K562 (cell line): ENCODE measurements at regions of chr1 and their contacts with region 1.

Region 1: GRCh38 chr1:52022133-52022532 is 11.5 kb downstream of the KTI12 start:
- DNase-seq: no peak
- ATAC-seq: no peak
- H3K4me3 ChIP-seq: no peak overlapping the region
- H3K27ac ChIP-seq: no peak overlapping the region
- H3K4me1 ChIP-seq: no peaks in the 10 kb centered on the region
- H3K27me3 ChIP-seq: no peaks in the 10 kb centered on the region
- CTCF ChIP-seq: no peak
- EP300 ChIP-seq: no peak
- POLR2A ChIP-seq: no peak
- RAD21 ChIP-seq: no peak

Region 2: DNA sequence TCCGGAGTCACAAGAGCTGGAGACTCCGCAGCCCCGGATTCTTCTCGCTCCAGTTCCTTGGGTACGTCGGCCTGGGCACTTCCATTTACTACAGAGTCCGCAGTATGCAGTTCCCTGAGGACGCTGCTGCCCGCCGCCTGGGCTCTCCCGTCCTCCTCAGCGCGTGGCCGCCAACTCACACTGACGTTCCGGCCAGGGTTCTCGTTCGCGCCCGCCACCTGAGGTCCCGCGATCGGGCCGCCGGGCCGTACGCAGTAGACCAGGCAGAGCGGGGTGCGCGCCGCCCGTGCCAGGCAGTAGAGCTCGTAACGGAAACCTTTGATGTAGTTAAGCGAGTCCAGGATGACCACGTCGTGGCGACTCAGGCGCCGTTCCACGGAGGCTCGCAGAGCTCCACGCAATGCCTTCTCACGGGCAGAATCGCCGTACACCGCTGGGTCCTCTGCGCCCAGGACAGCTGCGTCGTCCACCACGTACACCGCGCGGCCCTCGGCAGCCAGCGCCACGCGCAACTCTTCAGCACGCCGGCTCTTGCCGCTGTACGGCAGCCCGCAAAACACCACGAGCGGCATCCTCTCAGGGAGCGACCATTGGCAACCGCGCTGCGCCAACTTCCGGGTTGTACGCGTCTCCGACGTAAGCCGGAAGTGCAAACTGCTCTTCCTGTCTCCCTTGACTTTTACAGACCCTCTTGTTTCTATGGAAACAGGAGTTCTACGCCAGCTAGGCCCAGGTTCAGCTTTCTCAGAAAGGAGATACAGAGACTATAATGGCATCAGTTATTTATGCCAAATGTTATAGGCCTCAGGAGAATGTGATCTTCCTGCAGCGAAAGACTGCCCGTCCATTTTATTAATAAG is 11.3 kb after region 1 on chr1 and contains the start of gene KTI12:
- CTCF ChIA-PET with region 1: no interaction called
- POLR2A ChIA-PET with region 1: interaction called, 15 read pairs
- in situ Hi-C with region 1: no loop called
- intact Hi-C with region 1: no loop called
- DNase-seq: peak; percentile 85 to 97 (median 88)
- ATAC-seq: peak; percentile 93
- H3K4me3 ChIP-seq: peak within 1 kb of the TSS; percentile 66
- H3K27ac ChIP-seq: peak within 1 kb of the TSS; percentile 88
- H3K4me1 ChIP-seq: peaks cover 12 to 17% of the 10 kb centered on the region in 2 experiments; a peak in 4 of 5 replicates
- H3K27me3 ChIP-seq: no peaks in the 10 kb centered on the region
- CTCF ChIP-seq: 0 out of 6 replicates have a peak, but pooled peaks of 1 of the 3 experiments have one; percentile 3
- EP300 ChIP-seq: peak; percentile 43
- POLR2A ChIP-seq: peak; percentile 96
- RAD21 ChIP-seq: 0 out of 4 replicates have a peak, but pooled peaks of 1 of the 2 experiments have one; percentile 4
- polyA plus RNA-seq, gene KTI12: 3.1 to 4.8 TPM